ENCODE measurements at regions of chr2 and their contacts with region 1.

Region 1: GRCh38 chr2:69914961-69915945 is at the start of gene MXD1:
- DNase-seq: no peak
- H3K4me3 ChIP-seq: peak within 1 kb of the TSS; percentile 78
- CTCF ChIP-seq: no peak

Region 2: DNA sequence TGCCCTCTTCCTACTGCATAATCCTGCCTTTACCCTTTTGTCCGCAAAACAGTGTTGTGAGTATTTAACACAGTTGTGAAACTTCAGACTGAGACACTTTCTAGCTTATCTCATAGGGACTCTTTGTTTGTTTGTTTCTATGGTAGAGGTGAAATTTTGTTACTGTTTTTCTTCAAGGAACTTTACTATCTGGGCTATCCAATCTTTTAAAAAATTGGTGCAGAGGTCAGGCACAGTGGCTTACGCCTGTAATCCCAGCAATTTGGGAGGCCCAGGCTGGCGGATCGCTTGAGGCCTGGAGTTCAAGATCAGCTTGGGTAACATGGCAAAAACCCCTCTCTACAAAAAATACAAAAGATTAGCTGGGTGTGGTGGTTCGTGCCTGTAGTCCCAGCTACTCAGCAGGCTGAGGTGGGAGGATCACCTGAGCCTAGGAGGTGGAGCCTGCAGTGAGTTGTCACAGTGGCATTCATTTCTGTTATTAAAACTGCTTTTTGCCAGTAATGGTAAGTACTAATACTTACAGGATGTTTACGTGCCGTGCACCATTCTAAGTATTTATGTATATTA is 67.0 kb before region 1 on chr2:
- in situ Hi-C with region 1: no loop called
- DNase-seq: no peak
- H3K4me3 ChIP-seq: no peak overlapping the region
- CTCF ChIP-seq: no peak

Region 3: DNA sequence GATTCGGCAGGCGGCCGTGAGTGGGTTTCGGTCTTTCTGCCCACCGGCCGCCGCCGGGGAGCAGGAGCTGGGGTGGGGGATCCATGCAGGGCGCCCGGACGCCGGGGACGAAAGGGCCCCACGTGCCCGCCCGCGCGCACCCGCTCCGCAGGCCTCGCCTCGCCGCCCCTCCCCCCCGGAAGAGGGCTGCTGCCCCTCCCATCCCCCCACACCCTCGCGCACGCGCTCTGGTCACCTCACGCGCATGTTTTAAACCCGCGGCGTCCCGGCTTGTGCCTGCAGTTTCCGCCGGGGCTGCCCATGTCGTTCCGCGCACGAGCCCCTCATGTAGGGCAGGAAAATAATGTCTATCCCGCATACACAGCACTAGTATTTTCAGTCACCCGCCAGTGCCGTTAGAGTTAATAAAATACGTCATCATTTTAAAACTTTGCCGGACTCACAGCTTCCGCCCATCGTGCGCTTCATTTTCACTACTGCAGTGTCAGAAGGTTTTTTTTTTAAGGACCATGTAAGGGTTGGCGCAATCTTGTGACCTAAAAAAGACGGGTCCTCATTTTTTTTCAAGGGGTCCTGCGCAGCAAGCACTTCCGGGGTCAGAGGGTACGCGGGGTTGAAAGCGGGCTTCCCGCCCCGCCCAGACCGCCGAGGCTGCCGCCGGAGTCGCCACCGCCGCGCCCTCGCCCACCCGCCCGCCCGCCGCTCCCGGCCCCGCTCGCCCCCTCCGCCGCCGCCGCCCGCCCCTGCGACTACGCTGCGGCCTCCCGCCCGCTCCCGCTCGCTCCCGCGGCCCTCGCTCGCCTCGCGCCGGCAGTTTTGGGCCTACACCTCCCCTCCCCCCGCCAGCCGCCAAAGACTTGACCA is 171.8 kb after region 1 on chr2 and contains the start of gene PCBP1:
- in situ Hi-C with region 1: loop called (anchors 5 kb)
- DNase-seq: peak; percentile 86
- H3K4me3 ChIP-seq: peak within 1 kb of the TSS; percentile 82
- CTCF ChIP-seq: no peak

Measured in astrocyte of the cerebellum (primary cell).